Right ventricle myocardium superior (tissue), 1 donor: ENCODE measurements at regions of chr7 and their contacts with region 1.

Region 1: GRCh38 chr7:131107337-131108211 is 220.1 kb upstream of the MKLN1 start:
- DNase-seq: peak; percentile 67
- ATAC-seq: peak; percentile 53

Region 2: GRCh38 chr7:131007394-131008330 is 99.9 kb before region 1 on chr7:
- intact Hi-C with region 1: no loop called
- DNase-seq: peak; percentile 73
- ATAC-seq: peak; percentile 65

Region 3: DNA sequence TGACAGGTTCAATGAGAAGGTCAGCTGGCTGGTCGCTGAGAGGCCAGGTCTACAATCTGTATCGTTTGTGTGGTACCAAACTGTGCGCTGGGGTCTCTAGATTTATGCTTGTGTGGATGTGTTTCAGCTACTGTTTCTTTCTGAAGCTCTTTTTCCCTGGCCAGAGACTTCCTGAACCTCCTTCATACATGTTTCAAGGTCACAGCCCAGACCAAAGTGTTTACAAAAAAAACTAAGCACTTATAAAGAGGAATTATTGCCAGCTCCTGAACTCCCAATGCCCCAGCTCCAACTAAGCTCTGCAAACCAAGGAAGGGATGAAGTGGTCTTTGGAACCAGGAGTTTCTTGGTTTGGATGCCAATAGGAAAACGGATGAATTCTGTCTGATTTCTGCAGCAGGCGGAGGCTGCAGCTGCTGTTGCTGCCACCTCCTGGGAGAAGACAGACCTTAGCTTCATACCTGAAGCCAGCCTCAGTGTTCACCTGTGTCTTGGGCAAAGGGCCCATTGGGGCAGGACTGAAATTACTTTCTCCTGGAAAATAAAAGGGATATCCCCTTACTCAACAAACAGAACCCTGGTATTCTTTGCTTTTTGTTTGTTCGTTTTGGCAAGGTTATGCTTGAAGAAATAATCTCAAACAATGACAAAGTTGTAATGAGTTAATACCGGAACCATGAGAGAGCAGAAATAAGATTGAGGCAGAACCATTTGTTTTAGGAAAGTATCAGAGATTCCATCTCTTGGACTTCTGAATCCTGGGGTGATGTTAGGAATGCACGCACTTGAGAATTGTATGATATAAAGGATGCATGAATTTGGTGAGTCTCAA is 195.5 kb after region 1 on chr7:
- intact Hi-C with region 1: loop called (anchors 10 kb)
- DNase-seq: peak; percentile 43
- ATAC-seq: peak; percentile 68